ENCODE measurements at regions of chr20 and their contacts with region 1.

Region 1: DNA sequence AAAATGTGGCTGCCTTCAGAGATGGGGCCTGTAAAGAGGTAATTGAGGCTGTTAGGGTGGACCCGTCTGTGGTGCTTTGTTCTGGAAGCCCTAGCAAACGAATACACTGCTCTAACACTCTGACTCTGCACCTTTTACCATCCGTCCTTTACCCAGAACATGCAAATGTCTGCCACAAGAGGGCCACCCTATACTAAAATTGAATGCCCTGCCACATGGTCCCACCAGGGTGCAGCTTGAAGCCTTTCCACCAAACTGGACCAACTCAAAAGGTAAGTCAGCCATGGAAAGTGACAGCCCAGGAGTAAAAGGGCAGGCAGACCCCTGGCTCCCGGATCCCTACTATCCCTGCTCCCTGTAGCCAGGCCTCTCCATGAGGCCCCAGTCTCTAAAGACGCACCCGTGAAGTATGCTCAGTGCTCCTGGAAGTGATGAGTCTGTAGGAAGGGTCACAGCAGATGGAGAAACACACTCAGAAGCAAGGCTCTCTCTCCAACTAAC is 5.8 kb upstream of the BFSP1 start:
- DNase-seq: peak; percentile 90 to 97
- ATAC-seq: peak; percentile 98
- H3K4me3 ChIP-seq: no peak overlapping the region
- H3K27ac ChIP-seq: peak overlapping the region; percentile 60 to 80
- H3K4me1 ChIP-seq: peaks cover 41% of the 10 kb centered on the region
- CTCF ChIP-seq: peak; percentile 99
- EP300 ChIP-seq: no peak
- POLR2A ChIP-seq: no peak
- RAD21 ChIP-seq: peak; percentile 100

Region 2: GRCh38 chr20:17550983-17551350 is 14.0 kb after region 1 on chr20:
- CTCF ChIA-PET with region 1: interaction called, 30 read pairs
- POLR2A ChIA-PET with region 1: interaction called, 20 read pairs
- DNase-seq: no peak
- ATAC-seq: no peak
- H3K4me3 ChIP-seq: no peak overlapping the region
- H3K27ac ChIP-seq: no peak overlapping the region
- H3K4me1 ChIP-seq: peaks cover 6% of the 10 kb centered on the region
- CTCF ChIP-seq: no peak
- EP300 ChIP-seq: no peak
- POLR2A ChIP-seq: no peak
- RAD21 ChIP-seq: no peak

Region 3: GRCh38 chr20:17569616-17570346 is 32.8 kb after region 1 on chr20 and contains the start of gene DSTN:
- CTCF ChIA-PET with region 1: interaction called, 94 read pairs
- POLR2A ChIA-PET with region 1: interaction called, 25 read pairs
- DNase-seq: peak; percentile 96 to 99
- ATAC-seq: peak; percentile 85 to 88
- H3K4me3 ChIP-seq: peak within 1 kb of the TSS; percentile 87
- H3K27ac ChIP-seq: peak within 1 kb of the TSS; percentile 91 to 96
- H3K4me1 ChIP-seq: peaks cover 51% of the 10 kb centered on the region
- CTCF ChIP-seq: no peak
- EP300 ChIP-seq: peak in 1 of 2 experiments; percentile 16; a peak in 1 of 5 replicates
- POLR2A ChIP-seq: peak; percentile 98
- RAD21 ChIP-seq: peak in 1 of 2 experiments; percentile 9; a peak in 1 of 5 replicates
- polyA plus RNA-seq, gene DSTN: 425 and 544 TPM in 2 replicates

Region 4: DNA sequence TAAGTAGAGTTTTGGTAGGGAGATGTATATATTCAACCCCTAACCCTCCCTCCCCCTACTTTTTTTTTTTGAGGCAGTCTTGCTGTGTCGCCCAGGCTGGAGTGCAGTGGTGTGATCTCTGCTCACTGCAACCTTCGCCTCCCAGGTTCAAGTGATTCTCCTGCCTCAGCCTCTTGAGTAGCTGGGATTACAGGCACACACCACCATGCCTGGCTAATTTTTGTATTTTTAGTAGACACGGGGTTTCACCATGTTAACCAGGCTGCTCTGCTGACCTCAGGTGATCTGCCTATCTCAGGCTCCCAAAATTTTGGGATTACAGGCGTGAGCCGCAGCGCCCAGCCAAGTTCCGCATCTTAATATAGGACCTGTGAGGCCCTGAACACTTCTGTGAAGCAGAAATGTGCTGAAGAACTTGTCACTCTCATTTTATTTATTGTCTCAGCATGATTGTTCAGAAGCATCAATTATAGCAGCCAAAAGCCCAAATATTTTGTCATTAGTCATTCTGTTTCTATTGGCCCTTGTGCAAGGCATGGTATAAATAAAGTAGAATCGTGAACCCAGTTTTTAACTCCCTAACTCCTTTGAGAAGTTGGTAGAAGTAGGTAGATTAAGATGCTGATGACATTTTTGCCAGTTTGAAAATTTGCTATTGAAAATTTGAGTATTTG is 52.3 kb after region 1 on chr20:
- CTCF ChIA-PET with region 1: interaction called, 18 read pairs
- POLR2A ChIA-PET with region 1: interaction called, 3 read pairs
- DNase-seq: no peak
- ATAC-seq: peak in 1 of 2 experiments; percentile 8; a peak in 2 of 6 replicates
- H3K4me3 ChIP-seq: no peak overlapping the region
- H3K27ac ChIP-seq: 0 out of 6 replicates have a peak overlapping the region, but pooled peaks of 1 of the 2 experiments have one; percentile 6
- H3K4me1 ChIP-seq: peaks cover 72% of the 10 kb centered on the region
- CTCF ChIP-seq: no peak
- EP300 ChIP-seq: no peak
- POLR2A ChIP-seq: no peak
- RAD21 ChIP-seq: no peak

Region 5: DNA sequence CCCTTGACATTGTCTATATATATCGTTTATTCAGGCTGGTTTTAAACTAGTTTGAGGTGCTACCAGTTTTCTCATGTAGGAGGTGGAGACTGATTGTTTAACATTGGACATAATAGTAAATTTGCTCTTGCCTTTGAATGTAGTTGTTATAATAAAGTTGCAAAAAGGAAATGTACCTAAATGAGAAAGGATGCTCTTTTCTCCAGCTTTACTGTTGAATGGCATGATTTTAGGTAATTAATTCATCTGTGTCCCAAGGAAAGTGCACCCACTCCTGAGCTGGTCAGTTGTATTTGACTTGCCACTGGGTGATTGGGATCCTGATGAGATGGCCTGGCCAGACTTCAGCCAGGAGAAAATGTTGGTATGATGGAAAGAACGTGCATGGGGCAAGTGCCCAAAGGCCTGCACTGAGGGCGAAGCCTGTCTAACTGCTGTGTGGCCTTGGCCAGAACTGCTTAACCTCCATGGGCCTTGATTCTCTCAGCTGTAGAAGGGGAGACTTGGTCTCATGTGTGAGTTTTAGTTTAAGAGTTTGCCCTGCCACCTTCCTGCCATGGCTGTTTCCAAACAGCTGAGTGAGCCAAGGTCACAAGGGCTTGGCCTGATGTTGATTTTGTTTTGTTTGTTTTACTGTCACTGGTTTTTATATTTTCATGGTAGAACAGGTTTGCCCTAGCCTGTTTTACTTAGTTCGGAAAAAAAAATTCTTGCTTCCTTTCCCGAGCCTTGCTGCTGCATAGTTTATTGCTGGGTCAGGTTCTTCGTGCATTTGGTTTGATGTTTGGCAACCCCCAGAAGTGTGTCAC is 68.1 kb after region 1 on chr20:
- CTCF ChIA-PET with region 1: interaction called, 31 read pairs
- POLR2A ChIA-PET with region 1: interaction called, 4 read pairs
- DNase-seq: no peak
- ATAC-seq: peak; percentile 20 to 34; a peak in 4 of 6 replicates
- H3K4me3 ChIP-seq: no peak overlapping the region
- H3K27ac ChIP-seq: peak overlapping the region; percentile 4 to 55; a peak in 4 of 6 replicates
- H3K4me1 ChIP-seq: peaks cover 64% of the 10 kb centered on the region
- CTCF ChIP-seq: no peak
- EP300 ChIP-seq: no peak
- POLR2A ChIP-seq: no peak
- RAD21 ChIP-seq: no peak

Region 6: GRCh38 chr20:17985388-17986018 is 448.5 kb after region 1 on chr20:
- CTCF ChIA-PET with region 1: no interaction called
- POLR2A ChIA-PET with region 1: no interaction called
- DNase-seq: no peak
- ATAC-seq: peak; percentile 47 to 73; a peak in 5 of 6 replicates
- H3K4me3 ChIP-seq: no peak overlapping the region
- H3K27ac ChIP-seq: no peak overlapping the region
- H3K4me1 ChIP-seq: 0 out of 3 replicates have a peak, but pooled peaks cover 5% of the 10 kb centered on the region
- CTCF ChIP-seq: no peak
- EP300 ChIP-seq: no peak
- POLR2A ChIP-seq: no peak
- RAD21 ChIP-seq: no peak

Measured in A549 (cell line).